ENCODE measurements at regions of chr6 and their contacts with region 1.

Region 1: DNA sequence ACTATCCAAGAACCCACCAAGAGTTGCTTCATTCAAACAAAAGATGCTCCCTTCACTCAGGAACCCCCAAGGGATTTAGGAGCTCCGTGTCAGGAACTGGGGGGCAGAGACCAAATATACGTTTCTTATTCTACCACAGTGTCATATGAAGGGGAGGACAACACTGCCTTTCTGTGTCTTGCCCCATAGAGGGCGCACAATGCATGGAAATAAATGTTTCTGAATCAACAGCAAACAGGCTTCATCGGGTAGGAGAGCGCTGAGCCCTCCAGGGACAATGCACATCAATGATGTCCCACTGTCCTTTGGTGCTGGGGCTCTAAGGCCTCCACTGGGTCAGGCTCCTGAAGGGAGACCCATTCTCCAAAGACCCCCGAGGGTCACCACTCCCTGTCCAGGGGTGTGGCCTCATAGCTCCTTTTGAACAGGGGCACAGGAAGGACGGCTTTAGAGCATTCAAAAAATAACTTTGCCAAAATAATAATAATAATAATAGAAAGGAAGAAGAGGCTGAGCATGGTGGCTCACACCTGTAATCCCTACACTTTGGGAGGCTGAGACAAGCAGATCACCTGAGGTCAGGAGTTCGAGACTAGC is 31.1 kb downstream of the PLG start:
- DNase-seq: peak; percentile 75
- H3K4me3 Mint-ChIP-seq: no peak overlapping the region
- H3K27ac Mint-ChIP-seq: no peak overlapping the region
- H3K4me1 Mint-ChIP-seq: no peaks in the 10 kb centered on the region
- H3K27me3 Mint-ChIP-seq: peaks cover 4% of the 10 kb centered on the region

Region 2: DNA sequence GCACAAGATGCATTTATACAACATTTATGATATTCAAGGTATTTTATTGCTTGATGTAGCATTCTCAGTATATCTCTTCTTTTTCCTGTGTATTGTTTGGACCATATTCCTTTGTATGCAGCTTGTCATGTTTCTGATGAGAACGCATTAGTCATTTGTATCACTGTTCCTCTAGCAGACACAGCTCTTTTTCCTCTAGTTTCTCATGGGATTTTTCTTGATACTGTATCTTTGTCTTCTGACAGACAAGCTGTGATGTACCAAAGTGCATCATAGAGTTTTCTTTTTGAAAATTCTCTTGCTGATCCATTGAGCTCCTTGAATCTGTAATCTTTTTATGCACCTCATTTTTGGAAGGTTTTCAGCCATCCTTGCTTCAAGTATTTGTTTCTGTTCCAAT is 244.1 kb before region 1 on chr6:
- intact Hi-C with region 1: no loop called
- DNase-seq: no peak
- H3K4me3 Mint-ChIP-seq: no peak overlapping the region
- H3K27ac Mint-ChIP-seq: no peak overlapping the region
- H3K4me1 Mint-ChIP-seq: no peaks in the 10 kb centered on the region
- H3K27me3 Mint-ChIP-seq: peaks cover 18% of the 10 kb centered on the region

Region 3: GRCh38 chr6:160810235-160810634 is 77.1 kb after region 1 on chr6:
- intact Hi-C with region 1: no loop called
- DNase-seq: no peak
- H3K4me3 Mint-ChIP-seq: no peak overlapping the region
- H3K27ac Mint-ChIP-seq: no peak overlapping the region
- H3K4me1 Mint-ChIP-seq: no peaks in the 10 kb centered on the region
- H3K27me3 Mint-ChIP-seq: no peaks in the 10 kb centered on the region

Region 4: DNA sequence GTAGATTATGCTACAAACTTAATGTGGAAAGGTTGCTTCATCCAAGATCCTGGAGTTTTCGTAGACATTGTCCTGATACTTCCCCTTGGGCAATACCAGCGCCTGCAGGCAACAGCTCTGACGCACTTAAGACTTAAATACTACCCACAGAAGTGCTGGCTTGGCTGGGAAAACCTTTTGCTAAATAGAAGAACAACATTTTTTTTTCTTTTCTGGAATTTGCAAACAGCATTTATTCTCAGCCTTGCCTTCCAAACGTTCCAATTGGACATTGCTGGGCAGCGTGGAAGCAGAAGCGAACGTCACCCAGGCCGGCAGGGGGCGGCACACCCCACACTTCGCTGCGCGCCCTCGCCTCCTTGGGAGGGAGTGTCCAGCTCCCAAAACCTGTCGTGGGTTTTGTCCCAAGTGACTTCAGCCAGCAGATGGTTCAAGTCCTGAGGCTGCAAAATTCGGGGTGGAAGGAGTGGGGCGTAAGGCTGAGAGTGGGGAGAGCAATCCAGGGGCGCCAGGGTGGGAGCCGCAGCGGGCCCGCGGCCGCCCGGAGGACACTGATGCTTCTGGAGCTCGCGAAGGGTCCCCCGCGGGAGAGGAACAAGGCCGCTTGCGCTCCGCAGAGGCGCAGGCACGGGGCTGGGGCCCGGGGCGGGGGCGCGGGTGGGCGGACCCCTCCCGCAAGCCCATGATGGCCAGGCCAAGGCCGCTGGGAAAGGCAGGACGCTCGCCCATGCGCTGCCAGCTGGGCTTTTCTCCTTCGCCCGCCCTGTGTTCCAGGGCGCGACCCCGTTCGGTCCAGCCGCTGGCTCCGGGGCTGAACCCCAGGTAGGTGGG is 197.6 kb after region 1 on chr6:
- intact Hi-C with region 1: loop called (anchors 5 kb)
- DNase-seq: peak; percentile 87
- H3K4me3 Mint-ChIP-seq: peak overlapping the region; percentile 43
- H3K27ac Mint-ChIP-seq: no peak overlapping the region
- H3K4me1 Mint-ChIP-seq: no peaks in the 10 kb centered on the region
- H3K27me3 Mint-ChIP-seq: peaks cover 28% of the 10 kb centered on the region

Region 5: GRCh38 chr6:161101517-161101916 is 368.4 kb after region 1 on chr6:
- intact Hi-C with region 1: no loop called
- DNase-seq: no peak
- H3K4me3 Mint-ChIP-seq: no peak overlapping the region
- H3K27ac Mint-ChIP-seq: no peak overlapping the region
- H3K4me1 Mint-ChIP-seq: peaks cover 8% of the 10 kb centered on the region
- H3K27me3 Mint-ChIP-seq: no peaks in the 10 kb centered on the region